Heart right ventricle (tissue), 16 donors: ENCODE measurements at regions of chr20 and their contacts with region 1.

Region 1: GRCh38 chr20:32031007-32031958 is 20.8 kb upstream of the HCK start:
- DNase-seq: peak; percentile 80 to 87
- ATAC-seq: peak; percentile 79 to 91 (median 88)
- H3K4me3 ChIP-seq: peak overlapping the region in 8 of 10 donors; percentile 6 to 44 (median 33)
- H3K27ac ChIP-seq: peak overlapping the region in 1 of 10 donors; percentile 41
- H3K4me1 ChIP-seq: peaks cover 3 to 50% (median 11%) of the 10 kb centered on the region in 9 donors
- H3K27me3 ChIP-seq: peaks cover 0 to 34% (median 15%) of the 10 kb centered on the region in 7 donors
- CTCF ChIP-seq: peak in 8 of 9 donors; percentile 84 to 98 (median 88)

Region 2: DNA sequence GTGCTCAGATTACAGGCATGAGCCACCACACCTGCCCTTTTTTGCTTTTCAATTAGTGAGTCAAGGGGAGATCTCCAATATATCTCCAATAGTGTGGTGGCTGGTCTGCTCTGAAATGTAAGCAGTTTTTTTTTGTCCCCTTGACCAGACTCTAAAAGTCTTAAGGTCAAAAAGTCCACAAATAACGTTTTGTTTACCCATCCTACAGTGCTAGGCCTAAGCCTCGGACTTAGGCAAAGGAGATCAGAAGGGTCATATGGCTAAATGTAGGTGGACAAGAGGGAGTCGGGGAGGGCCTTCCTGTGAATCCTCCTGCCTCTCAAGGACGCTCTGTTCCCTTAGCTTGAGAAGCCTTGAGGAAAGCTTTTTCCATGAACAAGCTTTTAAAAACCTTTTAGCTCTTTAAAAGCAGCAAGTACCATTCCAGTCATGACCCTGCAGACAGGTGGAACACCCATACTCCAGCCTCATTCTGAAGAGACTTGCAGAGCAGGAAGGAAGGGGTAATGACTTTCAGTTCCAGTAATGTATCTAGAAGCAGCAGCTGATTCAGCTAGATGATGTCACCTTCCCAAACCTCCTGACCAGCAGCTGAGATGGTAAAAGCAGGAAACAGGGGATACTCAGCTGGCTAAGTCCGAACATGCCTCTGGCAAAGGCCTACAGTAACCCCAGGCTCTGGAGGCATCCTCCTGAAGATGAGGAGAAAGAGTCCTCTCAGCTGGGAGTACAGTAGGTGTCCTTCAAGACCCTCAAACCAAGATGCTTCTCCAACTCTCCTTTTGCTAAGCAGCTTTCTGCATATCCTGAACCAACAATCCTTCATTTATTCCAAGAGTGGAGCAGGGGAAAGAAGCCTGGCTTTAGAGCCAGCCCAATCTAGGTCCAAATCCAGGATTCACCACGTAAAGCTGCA is 332.2 kb before region 1 on chr20:
- intact Hi-C with region 1: no loop called
- DNase-seq: peak in 1 of 2 donors; percentile 78
- ATAC-seq: peak; percentile 74 to 93 (median 89)
- H3K4me3 ChIP-seq: no peak overlapping the region
- H3K27ac ChIP-seq: peak overlapping the region; percentile 55 to 93 (median 86)
- H3K4me1 ChIP-seq: peaks cover 25 to 100% (median 84%) of the 10 kb centered on the region in 9 donors
- H3K27me3 ChIP-seq: no peaks in the 10 kb centered on the region
- CTCF ChIP-seq: no peak

Region 3: DNA sequence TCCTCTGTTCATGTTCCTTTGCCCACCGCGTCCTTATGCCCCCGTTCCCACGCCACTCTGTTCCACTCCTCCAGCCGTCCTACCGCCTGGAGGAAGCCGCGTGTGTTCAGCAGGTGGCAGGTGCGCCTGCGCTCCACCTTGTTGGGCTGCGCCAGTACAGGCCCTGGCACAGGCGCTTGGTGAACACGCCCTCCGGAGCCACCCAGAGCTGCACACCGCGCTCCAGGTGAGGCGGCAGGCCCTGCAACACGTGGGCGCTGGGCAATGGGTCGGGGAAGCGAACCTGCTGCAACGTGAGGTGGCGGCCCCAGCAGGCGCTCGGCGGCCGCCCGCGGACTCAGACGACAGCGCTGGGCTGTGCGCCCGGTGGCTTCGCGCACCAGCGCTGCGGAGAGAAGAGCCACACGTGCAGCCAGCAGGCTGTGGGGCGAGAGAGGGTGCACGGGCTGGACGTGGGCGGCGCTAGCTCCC is 181.8 kb before region 1 on chr20:
- intact Hi-C with region 1: loop called in 9 of 10 experiments (anchors 1 to 10 kb)
- DNase-seq: no peak
- ATAC-seq: no peak
- H3K4me3 ChIP-seq: no peak overlapping the region
- H3K27ac ChIP-seq: no peak overlapping the region
- H3K4me1 ChIP-seq: peaks cover 0 to 18% (median 0%) of the 10 kb centered on the region in 9 donors
- H3K27me3 ChIP-seq: peaks cover 0 to 52% (median 39%) of the 10 kb centered on the region in 7 donors
- CTCF ChIP-seq: no peak

Region 4: GRCh38 chr20:31943052-31943471 is 88.2 kb before region 1 on chr20:
- intact Hi-C with region 1: loop called in 1 of 10 experiments (anchors 10 kb)
- DNase-seq: peak; percentile 45 to 51
- ATAC-seq: peak; percentile 53 to 94 (median 84)
- H3K4me3 ChIP-seq: no peak overlapping the region
- H3K27ac ChIP-seq: peak overlapping the region in 7 of 10 donors; percentile 22 to 48 (median 33)
- H3K4me1 ChIP-seq: peaks cover 3 to 22% (median 12%) of the 10 kb centered on the region in 9 donors
- H3K27me3 ChIP-seq: no peaks in the 10 kb centered on the region
- CTCF ChIP-seq: no peak

Region 5: GRCh38 chr20:31968291-31969126 is 62.8 kb before region 1 on chr20:
- intact Hi-C with region 1: loop called in 1 of 10 experiments (anchors 10 kb)
- DNase-seq: peak; percentile 71 to 82
- ATAC-seq: peak; percentile 88 to 97 (median 92)
- H3K4me3 ChIP-seq: peak overlapping the region in 1 of 10 donors; percentile 41
- H3K27ac ChIP-seq: no peak overlapping the region
- H3K4me1 ChIP-seq: peaks cover 0 to 10% (median 0%) of the 10 kb centered on the region in 9 donors
- H3K27me3 ChIP-seq: peaks cover 7 to 62% (median 52%) of the 10 kb centered on the region in 7 donors
- CTCF ChIP-seq: no peak

Region 6: GRCh38 chr20:31979713-31980426 is 51.4 kb before region 1 on chr20:
- intact Hi-C with region 1: no loop called
- DNase-seq: no peak
- ATAC-seq: no peak
- H3K4me3 ChIP-seq: no peak overlapping the region
- H3K27ac ChIP-seq: no peak overlapping the region
- H3K4me1 ChIP-seq: no peaks in the 10 kb centered on the region
- H3K27me3 ChIP-seq: peaks cover 0 to 42% (median 10%) of the 10 kb centered on the region in 7 donors
- CTCF ChIP-seq: no peak

Region 7: DNA sequence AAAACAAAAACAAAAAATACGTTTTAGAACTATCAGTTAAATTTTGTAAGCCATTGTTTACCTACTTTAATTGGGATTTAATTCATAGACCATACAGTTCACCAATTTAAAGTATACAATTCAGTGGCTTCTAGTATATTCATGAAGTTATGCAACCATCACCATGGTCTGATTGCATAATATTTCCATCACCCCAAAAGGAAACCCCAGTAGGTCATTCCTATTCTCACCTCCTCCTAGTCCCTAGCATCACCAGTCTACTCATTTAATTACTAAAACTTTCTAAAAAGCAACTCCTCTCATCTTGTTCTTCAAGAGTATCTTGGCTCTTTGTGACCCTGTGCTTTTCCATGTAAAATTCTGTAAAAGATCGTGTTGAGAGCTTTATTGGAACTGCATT is 387.1 kb after region 1 on chr20:
- intact Hi-C with region 1: no loop called
- DNase-seq: no peak
- ATAC-seq: no peak
- H3K4me3 ChIP-seq: no peak overlapping the region
- H3K27ac ChIP-seq: no peak overlapping the region
- H3K4me1 ChIP-seq: peaks cover 0 to 22% (median 15%) of the 10 kb centered on the region in 9 donors
- H3K27me3 ChIP-seq: no peaks in the 10 kb centered on the region
- CTCF ChIP-seq: no peak

Region 8: GRCh38 chr20:32521780-32522525 is 490.7 kb after region 1 on chr20:
- intact Hi-C with region 1: loop called in 1 of 10 experiments (anchors 10 kb)
- DNase-seq: peak; percentile 64 to 71
- ATAC-seq: peak; percentile 67 to 82 (median 74)
- H3K4me3 ChIP-seq: no peak overlapping the region
- H3K27ac ChIP-seq: no peak overlapping the region
- H3K4me1 ChIP-seq: peaks cover 4 to 61% (median 26%) of the 10 kb centered on the region in 9 donors
- H3K27me3 ChIP-seq: no peaks in the 10 kb centered on the region
- CTCF ChIP-seq: peak; percentile 70 to 90 (median 87)